Naive thymus-derived CD4-positive, alpha-beta T cell (primary cell): ENCODE measurements at regions of chr15 and their contacts with region 1.

Region 1: GRCh38 chr15:80989518-80990478 is at the start of gene MESD:
- DNase-seq: peak; percentile 89 to 97 (median 93)
- ATAC-seq: peak; percentile 99
- H3K4me3 ChIP-seq: peak within 1 kb of the TSS; percentile 95
- H3K4me3 Mint-ChIP-seq: peak within 1 kb of the TSS; percentile 95 to 100 (median 98)
- H3K27ac ChIP-seq: peak within 1 kb of the TSS; percentile 90
- H3K27ac Mint-ChIP-seq: peak within 1 kb of the TSS; percentile 92 to 99 (median 99)
- H3K4me1 ChIP-seq: peaks cover 28 to 45% of the 10 kb centered on the region in 2 donors
- H3K4me1 Mint-ChIP-seq: peaks cover 37 to 68% (median 64%) of the 10 kb centered on the region in 7 donors
- H3K27me3 ChIP-seq: no peaks in the 10 kb centered on the region
- H3K27me3 Mint-ChIP-seq: no peaks in the 10 kb centered on the region
- total RNA-seq, gene MESD: 17.1 to 42.5 (median 38.3) TPM

Region 2: DNA sequence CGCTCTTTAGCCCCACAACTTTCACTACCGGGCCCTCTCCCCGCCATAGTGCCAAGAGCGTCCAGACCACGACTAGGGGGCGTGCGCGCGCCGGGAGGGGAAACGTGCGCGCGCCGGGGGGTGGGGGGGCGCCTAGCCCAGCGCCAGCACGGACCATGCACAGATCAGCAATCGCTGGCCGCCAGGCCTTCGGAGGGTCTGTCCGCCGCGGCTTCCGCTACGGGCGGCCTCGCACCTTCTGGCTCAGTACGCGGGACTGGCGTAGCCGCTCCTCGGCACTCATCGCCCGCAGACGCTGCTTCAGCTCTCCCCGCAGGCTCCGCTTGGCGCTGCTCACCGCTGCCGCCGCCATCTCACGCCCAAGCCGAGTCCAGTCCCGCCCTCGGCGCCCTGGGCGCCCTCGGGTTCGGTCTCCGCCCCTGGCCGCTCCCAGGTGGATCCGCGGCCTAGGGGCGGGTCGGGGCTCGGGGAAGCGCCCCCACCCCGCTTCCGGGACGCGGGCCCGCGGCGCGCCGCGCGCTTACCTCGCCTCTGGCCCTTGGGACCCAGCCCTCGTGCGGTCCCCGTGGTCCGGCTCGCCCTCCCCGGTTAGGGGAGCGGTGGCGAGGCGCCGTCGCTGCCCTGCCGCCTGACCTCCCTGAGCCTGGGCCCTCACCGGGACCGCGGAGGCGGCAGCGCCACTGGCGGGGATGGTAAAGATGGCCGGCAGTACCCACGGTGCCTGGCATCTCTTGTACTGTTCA is 1093.0 kb before region 1 on chr15 and contains the start of gene MTHFS:
- CTCF ChIA-PET with region 1: no interaction called
- POLR2A ChIA-PET with region 1: no interaction called
- intact Hi-C with region 1: loop called in 1 of 2 experiments (anchors 10 kb)
- DNase-seq: peak; percentile 73 to 87 (median 83)
- ATAC-seq: peak; percentile 92
- H3K4me3 ChIP-seq: peak within 1 kb of the TSS; percentile 71
- H3K4me3 Mint-ChIP-seq: peak within 1 kb of the TSS; percentile 91 to 100 (median 99)
- H3K27ac ChIP-seq: peak within 1 kb of the TSS; percentile 92
- H3K27ac Mint-ChIP-seq: peak within 1 kb of the TSS; percentile 97 to 100 (median 100)
- H3K4me1 ChIP-seq: peaks cover 20 to 23% of the 10 kb centered on the region in 2 donors
- H3K4me1 Mint-ChIP-seq: peaks cover 28 to 49% (median 46%) of the 10 kb centered on the region in 7 donors
- H3K27me3 ChIP-seq: no peaks in the 10 kb centered on the region
- H3K27me3 Mint-ChIP-seq: no peaks in the 10 kb centered on the region
- total RNA-seq, gene MTHFS: 15.8 to 31.8 (median 20.3) TPM

Region 3: GRCh38 chr15:80776420-80777045 is 213.3 kb before region 1 on chr15:
- CTCF ChIA-PET with region 1: no interaction called
- POLR2A ChIA-PET with region 1: no interaction called
- intact Hi-C with region 1: no loop called
- DNase-seq: peak in 8 of 9 donors; percentile 13 to 66 (median 37)
- ATAC-seq: peak; percentile 78
- H3K4me3 ChIP-seq: no peak overlapping the region
- H3K4me3 Mint-ChIP-seq: no peak overlapping the region
- H3K27ac ChIP-seq: no peak overlapping the region
- H3K27ac Mint-ChIP-seq: no peak overlapping the region
- H3K4me1 ChIP-seq: no peaks in the 10 kb centered on the region
- H3K4me1 Mint-ChIP-seq: peaks cover 8 to 13% (median 8%) of the 10 kb centered on the region in 7 donors
- H3K27me3 ChIP-seq: peaks cover 4 to 17% of the 10 kb centered on the region in 2 donors
- H3K27me3 Mint-ChIP-seq: peaks cover 24 to 50% (median 28%) of the 10 kb centered on the region in 5 donors

Region 4: GRCh38 chr15:81015621-81016488 is 26.1 kb after region 1 on chr15:
- CTCF ChIA-PET with region 1: no interaction called
- POLR2A ChIA-PET with region 1: no interaction called
- intact Hi-C with region 1: no loop called
- DNase-seq: no peak
- ATAC-seq: no peak
- H3K4me3 ChIP-seq: no peak overlapping the region
- H3K4me3 Mint-ChIP-seq: no peak overlapping the region
- H3K27ac ChIP-seq: no peak overlapping the region
- H3K27ac Mint-ChIP-seq: no peak overlapping the region
- H3K4me1 ChIP-seq: no peaks in the 10 kb centered on the region
- H3K4me1 Mint-ChIP-seq: peaks cover 0 to 11% (median 5%) of the 10 kb centered on the region in 7 donors
- H3K27me3 ChIP-seq: no peaks in the 10 kb centered on the region
- H3K27me3 Mint-ChIP-seq: no peaks in the 10 kb centered on the region

Region 5: GRCh38 chr15:81323944-81324881 is 334.4 kb after region 1 on chr15 and contains the start of gene STARD5:
- CTCF ChIA-PET with region 1: no interaction called
- POLR2A ChIA-PET with region 1: no interaction called
- intact Hi-C with region 1: loop called in 1 of 2 experiments (anchors 5 kb)
- DNase-seq: peak; percentile 82 to 97 (median 92)
- ATAC-seq: peak; percentile 99
- H3K4me3 ChIP-seq: peak within 1 kb of the TSS; percentile 86
- H3K4me3 Mint-ChIP-seq: peak within 1 kb of the TSS; percentile 90 to 98 (median 94)
- H3K27ac ChIP-seq: peak within 1 kb of the TSS; percentile 78
- H3K27ac Mint-ChIP-seq: peak within 1 kb of the TSS; percentile 87 to 97 (median 92)
- H3K4me1 ChIP-seq: peaks cover 5 to 20% of the 10 kb centered on the region in 2 donors
- H3K4me1 Mint-ChIP-seq: peaks cover 31 to 65% (median 60%) of the 10 kb centered on the region in 7 donors
- H3K27me3 ChIP-seq: no peaks in the 10 kb centered on the region
- H3K27me3 Mint-ChIP-seq: no peaks in the 10 kb centered on the region
- total RNA-seq, gene STARD5: 5.0 to 11.7 (median 10.1) TPM